ENCODE measurements at regions of chr11 and their contacts with region 1.

Region 1: GRCh38 chr11:86261331-86261730 is 16.8 kb downstream of the EED start:
- DNase-seq: no peak
- H3K4me3 Mint-ChIP-seq: no peak overlapping the region
- H3K27ac Mint-ChIP-seq: no peak overlapping the region
- H3K4me1 Mint-ChIP-seq: peaks cover 38% of the 10 kb centered on the region
- H3K27me3 Mint-ChIP-seq: no peaks in the 10 kb centered on the region

Region 2: DNA sequence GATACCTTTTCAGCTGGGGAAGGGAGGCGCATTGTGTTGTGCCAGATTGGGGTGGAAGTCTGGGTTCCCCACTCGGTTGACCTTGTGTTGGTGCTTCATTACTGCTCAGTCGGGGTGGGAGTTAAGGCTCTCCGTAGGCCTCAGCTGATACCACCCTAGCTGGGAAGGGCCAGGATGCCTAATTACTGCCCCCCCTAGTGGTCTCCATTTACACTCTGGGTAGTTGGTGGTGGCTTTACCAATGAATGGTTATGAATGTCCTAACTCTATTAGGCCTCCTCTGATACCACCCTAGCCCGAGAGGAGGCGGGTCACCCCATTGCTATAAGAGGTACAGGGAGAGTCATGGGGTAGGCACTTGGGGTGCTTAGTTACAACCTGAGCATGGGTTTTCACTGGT is 13.2 kb after region 1 on chr11:
- CTCF ChIA-PET with region 1: no interaction called
- POLR2A ChIA-PET with region 1: no interaction called
- intact Hi-C with region 1: loop called (anchors 2 kb)
- DNase-seq: no peak
- H3K4me3 Mint-ChIP-seq: no peak overlapping the region
- H3K27ac Mint-ChIP-seq: no peak overlapping the region
- H3K4me1 Mint-ChIP-seq: peaks cover 56% of the 10 kb centered on the region
- H3K27me3 Mint-ChIP-seq: no peaks in the 10 kb centered on the region

Region 3: GRCh38 chr11:86386746-86387145 is 125.4 kb after region 1 on chr11:
- CTCF ChIA-PET with region 1: no interaction called
- POLR2A ChIA-PET with region 1: no interaction called
- intact Hi-C with region 1: no loop called
- DNase-seq: no peak
- H3K4me3 Mint-ChIP-seq: no peak overlapping the region
- H3K27ac Mint-ChIP-seq: no peak overlapping the region
- H3K4me1 Mint-ChIP-seq: no peaks in the 10 kb centered on the region
- H3K27me3 Mint-ChIP-seq: no peaks in the 10 kb centered on the region

Region 4: GRCh38 chr11:87265132-87265531 is 1003.8 kb after region 1 on chr11:
- CTCF ChIA-PET with region 1: no interaction called
- POLR2A ChIA-PET with region 1: no interaction called
- intact Hi-C with region 1: no loop called
- DNase-seq: no peak
- H3K4me3 Mint-ChIP-seq: no peak overlapping the region
- H3K27ac Mint-ChIP-seq: no peak overlapping the region
- H3K4me1 Mint-ChIP-seq: no peaks in the 10 kb centered on the region
- H3K27me3 Mint-ChIP-seq: no peaks in the 10 kb centered on the region